HEK293T (cell line): ENCODE measurements at regions of chr4 and their contacts with region 1.

Region 1: DNA sequence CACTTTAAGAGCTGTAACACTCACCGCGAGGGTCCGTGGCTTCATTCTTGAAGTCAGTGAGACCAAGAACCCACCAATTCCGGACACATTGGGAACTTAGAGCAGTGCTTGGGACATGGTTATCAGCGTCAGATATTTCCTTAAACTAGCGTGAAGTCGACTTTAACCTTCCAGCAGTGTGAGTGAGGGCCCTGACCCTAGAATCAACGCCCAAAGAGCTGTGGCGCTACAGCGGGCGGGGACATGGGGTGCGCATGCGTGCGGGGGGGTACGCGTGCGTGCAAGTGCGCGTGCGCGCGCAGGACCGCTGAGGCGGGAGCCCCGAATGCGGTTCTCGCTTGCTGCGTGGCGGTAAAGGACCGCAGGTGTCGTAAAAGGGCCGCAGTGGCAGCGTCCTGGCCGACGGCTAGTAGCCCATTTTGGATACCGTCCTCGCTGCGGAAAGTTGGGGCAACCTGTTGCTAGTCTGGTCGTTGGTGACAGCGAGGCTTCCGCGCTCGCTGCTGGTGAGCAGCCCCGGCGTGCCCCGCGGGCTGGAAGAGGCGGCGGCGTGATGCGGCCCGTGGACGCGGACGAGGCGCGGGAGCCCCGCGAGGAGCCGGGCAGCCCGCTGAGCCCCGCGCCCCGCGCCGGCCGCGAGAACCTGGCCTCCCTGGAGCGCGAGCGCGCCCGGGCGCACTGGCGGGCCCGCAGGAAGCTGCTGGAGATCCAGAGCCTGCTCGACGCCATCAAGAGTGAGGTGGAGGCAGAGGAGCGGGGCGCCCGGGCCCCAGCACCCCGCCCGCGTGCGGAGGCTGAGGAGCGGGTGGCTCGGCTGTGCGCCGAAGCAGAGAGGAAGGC is 19.8 kb upstream of the S100P start:
- DNase-seq: peak; percentile 98

Region 2: GRCh38 chr4:6625262-6625661 is 48.6 kb before region 1 on chr4:
- CTCF ChIA-PET with region 1: no interaction called
- POLR2A ChIA-PET with region 1: interaction called, 10 read pairs
- DNase-seq: no peak

Region 3: GRCh38 chr4:6640292-6641163 is 33.4 kb before region 1 on chr4 and contains the start of gene MRFAP1:
- CTCF ChIA-PET with region 1: interaction called, 3 read pairs
- POLR2A ChIA-PET with region 1: interaction called, 79 read pairs
- DNase-seq: peak; percentile 95

Region 4: DNA sequence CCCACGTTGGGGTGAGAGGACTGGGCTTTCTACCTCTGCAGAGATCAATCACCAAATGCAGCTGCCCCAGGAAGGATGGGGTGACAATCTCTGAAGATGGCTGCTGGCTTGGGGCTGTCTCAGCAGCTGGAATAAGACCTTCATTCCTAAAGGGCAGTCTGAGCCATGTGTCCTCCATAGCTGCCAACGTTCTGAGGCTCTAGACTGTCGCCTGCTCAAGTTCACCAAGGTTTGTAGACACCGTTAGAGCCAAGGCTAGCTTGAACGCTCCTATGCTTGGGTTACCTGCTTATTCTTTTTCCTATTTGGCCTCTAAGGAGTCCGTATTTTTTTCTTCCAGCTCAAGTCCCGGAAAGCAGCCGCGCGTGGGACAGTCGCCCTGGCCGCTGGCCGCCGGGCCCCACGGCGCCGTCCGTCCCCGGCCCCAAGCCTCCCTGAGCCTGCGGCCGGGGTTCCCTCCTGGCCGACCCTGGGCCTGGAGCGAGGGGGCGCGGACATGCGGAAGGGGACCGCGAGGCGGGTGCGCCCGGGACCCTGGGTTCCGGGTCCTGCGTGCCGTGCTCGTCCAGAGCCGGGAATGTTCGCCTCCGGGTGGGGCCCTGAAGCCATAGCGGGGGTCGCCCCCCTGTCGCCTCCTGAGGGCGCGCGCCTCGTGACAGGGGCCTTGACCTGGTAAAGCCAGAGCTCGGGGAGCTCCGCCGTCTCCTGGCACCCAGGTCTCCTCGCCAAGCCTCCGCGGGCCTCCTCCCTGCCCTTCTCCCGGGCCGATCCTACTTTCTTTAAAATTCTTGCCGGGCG is 10.1 kb before region 1 on chr4:
- CTCF ChIA-PET with region 1: interaction called, 4 read pairs
- POLR2A ChIA-PET with region 1: interaction called, 32 read pairs
- DNase-seq: no peak

Region 5: DNA sequence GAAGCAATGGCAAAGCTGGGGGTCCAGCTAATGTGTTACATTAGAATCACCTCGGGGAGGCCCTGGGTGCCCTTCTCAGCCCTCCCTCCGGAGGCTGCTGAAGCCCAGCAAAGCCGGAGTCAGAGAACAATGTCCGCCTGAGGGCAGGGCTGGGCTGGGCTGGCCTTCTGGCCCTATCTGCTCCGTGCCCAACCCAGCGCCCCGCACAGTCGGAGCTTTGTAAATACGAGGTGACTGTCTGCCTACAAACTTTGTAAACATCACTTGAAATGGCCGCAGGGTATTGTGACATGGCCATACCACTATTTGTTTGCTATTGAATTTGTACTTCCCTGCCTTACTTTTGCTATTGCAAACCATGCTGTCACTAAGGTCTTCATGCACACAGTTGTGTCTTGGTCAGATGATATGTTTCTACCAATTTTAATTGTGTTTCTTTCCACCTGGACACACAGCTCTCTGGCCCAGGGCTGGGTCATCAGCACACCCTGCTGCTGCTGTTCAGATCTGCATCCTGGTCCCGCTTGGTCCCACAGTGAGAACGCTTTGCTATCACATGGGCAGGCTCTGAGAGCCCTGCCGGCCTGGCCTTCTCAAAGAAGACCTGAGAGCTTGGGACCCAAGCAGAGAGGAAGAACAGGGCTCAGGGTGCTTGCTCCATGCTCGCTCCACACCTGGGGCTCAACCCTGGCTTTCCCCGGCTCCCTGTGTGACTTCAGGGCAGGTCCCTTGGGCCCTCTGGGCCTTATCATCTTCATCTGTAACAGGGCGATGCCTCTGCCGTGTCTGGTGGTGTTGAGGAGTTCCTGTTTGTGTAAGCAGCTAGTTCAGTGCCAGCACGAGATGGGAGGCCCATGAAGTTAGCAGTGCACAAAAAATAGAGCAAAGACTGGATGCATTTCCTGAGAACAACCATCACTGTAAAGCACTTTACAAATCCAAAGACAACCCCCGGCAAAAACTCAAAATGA is 22.1 kb after region 1 on chr4:
- CTCF ChIA-PET with region 1: interaction called, 3 read pairs
- POLR2A ChIA-PET with region 1: interaction called, 55 read pairs
- DNase-seq: no peak

Region 6: GRCh38 chr4:6716018-6716911 is 42.4 kb after region 1 on chr4 and contains the start of gene BLOC1S4:
- CTCF ChIA-PET with region 1: no interaction called
- POLR2A ChIA-PET with region 1: interaction called, 17 read pairs
- DNase-seq: peak; percentile 96

Region 7: DNA sequence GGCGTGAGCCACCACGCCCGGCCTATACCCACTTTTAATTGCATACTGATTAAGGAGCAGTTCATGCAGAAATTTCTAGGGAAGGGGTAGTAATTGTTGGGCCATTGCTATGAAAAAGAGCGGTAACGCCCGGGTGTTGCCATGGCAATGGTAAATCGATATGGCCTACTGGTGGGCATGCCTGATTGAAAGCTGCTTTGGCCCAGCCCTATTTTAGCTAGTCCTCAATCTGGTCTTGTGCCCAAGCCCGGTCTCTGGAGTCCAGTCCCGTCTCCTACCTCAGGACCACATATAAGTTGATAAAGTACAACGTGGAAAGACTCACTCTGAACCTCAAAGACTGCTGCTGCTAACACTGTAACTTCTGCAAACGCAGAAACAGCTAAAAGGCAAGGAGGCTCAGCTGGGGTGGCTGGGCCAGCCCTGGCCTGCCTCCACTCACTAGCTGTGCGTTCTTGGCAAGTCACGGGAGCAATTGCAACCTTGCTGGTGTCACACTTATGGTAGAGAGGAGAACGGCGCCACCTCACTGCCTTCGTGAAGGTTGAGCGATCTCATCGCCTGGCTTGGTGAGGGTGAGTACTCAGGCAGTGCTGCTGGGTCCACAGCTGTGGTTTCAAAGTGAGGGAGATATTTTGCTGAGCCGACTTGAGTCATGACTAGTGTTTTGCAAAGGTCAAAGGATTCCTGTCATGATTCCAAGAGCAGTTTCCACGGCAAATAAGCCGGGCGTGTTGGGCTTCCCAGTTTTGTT is 451.0 kb after region 1 on chr4:
- CTCF ChIA-PET with region 1: no interaction called
- POLR2A ChIA-PET with region 1: no interaction called
- DNase-seq: no peak